ENCODE measurements at regions of chr1 and their contacts with region 1.

Region 1: GRCh38 chr1:11805447-11806306 is at the starts of genes CLCN6 and MTHFR:
- DNase-seq: peak; percentile 99 to 100
- H3K4me3 ChIP-seq: peak within 1 kb of the TSS; percentile 72 to 74
- H3K27ac ChIP-seq: peak within 1 kb of the TSS; percentile 97
- H3K4me1 ChIP-seq: peaks cover 0 to 68% (median 46%) of the 10 kb centered on the region in 4 donors
- H3K27me3 ChIP-seq: no peaks in the 10 kb centered on the region
- CTCF ChIP-seq: peak in 1 of 2 experiments; percentile 12

Region 2: GRCh38 chr1:11735854-11736745 is 69.6 kb before region 1 on chr1 and contains the start of gene AGTRAP:
- intact Hi-C with region 1: loop called (anchors 5 kb)
- DNase-seq: peak; percentile 94 to 98
- H3K4me3 ChIP-seq: peak within 1 kb of the TSS; percentile 68
- H3K27ac ChIP-seq: peak within 1 kb of the TSS; percentile 77 to 81
- H3K4me1 ChIP-seq: peaks cover 0 to 40% (median 17%) of the 10 kb centered on the region in 4 donors
- H3K27me3 ChIP-seq: no peaks in the 10 kb centered on the region
- CTCF ChIP-seq: peak in 1 of 2 experiments; percentile 5

Region 3: DNA sequence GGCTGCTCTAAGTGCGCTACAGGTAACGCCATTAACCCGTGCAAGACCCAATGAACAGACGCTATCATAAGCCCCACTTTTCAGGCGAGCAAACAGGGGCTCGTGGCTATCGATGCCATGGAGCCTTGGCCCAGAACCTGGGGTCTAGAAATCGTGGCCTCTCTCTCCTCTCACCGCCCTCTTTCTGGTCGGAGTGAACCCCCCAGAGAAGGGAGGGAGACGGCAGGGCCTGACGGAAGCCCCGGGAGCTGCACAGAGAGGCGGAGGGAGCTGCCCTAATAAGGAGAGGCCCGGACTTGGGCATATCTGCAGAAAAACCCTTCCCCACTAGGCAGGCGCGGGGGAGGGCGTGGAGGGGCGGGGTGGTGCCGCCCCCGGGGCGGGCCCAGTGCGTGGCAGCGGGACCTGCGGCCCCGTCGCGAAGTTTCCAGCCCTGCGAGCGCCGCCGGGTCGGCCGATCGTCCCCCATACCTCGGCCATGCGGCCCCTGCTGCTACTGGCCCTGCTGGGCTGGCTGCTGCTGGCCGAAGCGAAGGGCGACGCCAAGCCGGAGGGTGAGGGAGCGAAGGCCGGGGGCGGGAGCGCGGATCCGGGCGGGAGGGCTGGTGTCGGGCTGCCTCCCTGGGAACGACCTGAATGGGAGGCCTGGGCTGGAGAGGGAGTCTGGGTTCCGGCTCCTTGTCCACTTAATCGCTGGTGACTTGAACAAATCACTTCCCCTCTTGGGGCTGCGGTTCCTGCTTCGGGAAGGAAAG is 128.8 kb after region 1 on chr1 and contains the start of gene PLOD1:
- intact Hi-C with region 1: no loop called
- DNase-seq: peak; percentile 88 to 96
- H3K4me3 ChIP-seq: peak within 1 kb of the TSS; percentile 58 to 80
- H3K27ac ChIP-seq: peak within 1 kb of the TSS; percentile 81 to 87
- H3K4me1 ChIP-seq: peaks cover 0 to 54% (median 41%) of the 10 kb centered on the region in 4 donors
- H3K27me3 ChIP-seq: no peaks in the 10 kb centered on the region
- CTCF ChIP-seq: no peak